Activated T-helper 2 cell treated with anti-CD3 and anti-CD28 coated beads, Interferon-gamma antibody, Interleukin-2, Interleukin-4, amounts not matched to agents 10 μg/mL and 5 μg/mL and 100 μg/mL, durations not matched to agents 14 hours and 24 hours and 36 hours (primary cell): ENCODE measurements at regions of chr5 and their contacts with region 1.

Region 1: GRCh38 chr5:54517174-54518092 is at the start of gene SNX18:
- DNase-seq: peak; percentile 89
- H3K4me3 Mint-ChIP-seq: peak within 1 kb of the TSS; percentile 82
- H3K27ac Mint-ChIP-seq: no peak within 1 kb of the TSS
- H3K4me1 Mint-ChIP-seq: peaks cover 31% of the 10 kb centered on the region
- H3K27me3 Mint-ChIP-seq: peaks cover 22% of the 10 kb centered on the region
- total RNA-seq, gene SNX18: 13.3 and 13.4 TPM in 2 replicates

Region 2: DNA sequence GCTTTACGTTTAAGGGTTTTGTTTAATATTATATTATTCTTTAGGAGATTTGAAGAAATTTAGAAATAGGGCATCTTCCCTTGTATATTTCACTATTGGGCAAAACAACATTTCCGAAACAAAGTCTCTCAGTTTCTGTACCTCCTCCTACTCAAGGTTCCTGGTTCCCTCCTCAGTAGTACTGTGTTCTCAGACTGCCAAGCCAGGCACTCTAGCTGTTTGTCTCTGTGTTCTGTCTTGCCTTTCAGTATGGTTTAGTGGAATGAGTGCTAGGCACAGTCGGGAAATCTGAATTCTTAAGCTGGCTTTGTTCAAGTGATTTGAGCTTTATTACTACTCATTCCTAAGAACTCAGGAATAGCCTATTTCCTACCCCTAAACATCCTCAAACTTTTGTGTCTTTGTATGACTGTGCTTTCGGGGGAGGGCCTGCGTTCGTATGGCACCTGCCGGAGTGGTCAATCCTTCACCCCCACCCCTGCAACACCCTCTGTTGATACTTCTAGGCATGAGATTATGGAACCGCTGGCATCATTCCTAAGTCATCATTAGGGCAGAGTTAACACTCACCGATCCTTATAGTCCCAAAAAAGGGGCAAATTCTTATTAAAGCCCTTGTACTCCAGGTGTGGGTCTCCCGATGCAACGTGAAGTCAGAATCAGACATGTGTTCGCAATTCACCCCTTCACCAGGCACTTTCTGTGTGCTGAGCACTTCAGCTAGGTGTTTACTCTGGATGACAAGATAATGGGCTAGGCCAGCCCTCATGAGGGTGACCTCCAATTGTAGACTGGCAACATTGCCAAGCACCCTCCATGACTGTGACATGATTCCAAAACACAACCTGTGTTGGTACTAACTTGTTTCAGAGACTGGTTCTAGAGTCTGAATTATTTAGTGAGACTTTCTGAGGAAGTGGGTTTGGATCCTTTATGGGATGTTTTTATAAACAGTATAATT is 24.7 kb after region 1 on chr5:
- intact Hi-C with region 1: no loop called
- DNase-seq: no peak
- H3K4me3 Mint-ChIP-seq: no peak overlapping the region
- H3K27ac Mint-ChIP-seq: no peak overlapping the region
- H3K4me1 Mint-ChIP-seq: peaks cover 7% of the 10 kb centered on the region
- H3K27me3 Mint-ChIP-seq: no peaks in the 10 kb centered on the region

Region 3: DNA sequence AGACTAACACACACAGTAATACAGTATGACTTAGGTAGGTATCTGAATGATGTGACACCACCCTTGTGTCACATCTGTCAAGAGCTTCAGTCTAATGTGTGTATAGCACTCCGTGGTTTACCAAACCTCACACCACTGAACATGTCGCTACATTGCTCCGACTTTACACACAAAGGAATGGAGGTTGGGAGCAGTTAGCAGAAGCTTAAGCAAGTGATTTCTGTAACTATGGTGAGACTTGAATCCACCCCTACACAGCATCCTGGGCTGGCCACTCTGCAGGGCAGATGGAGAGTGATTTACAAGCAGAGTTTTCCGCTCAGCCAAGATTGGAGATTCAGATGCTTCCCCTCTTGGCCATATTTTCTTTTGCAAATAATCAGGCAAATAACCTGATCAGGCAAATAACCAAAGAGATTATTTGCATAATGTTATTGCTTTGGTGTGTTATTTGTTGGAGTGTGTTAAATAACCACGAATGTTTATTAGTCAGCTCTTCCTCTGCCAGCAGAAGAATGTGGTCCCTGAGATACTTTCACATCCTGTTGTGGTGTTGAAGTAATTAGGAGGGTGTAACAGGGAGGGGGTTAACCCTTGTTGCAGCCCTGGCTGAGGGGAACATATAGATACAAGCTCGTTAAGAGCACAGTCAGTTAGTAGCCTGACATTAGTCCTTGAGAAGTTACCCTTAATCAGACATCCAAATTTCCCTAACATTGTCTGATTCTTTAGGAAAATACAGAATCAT is 92.9 kb after region 1 on chr5:
- intact Hi-C with region 1: loop called (anchors 10 kb)
- DNase-seq: peak; percentile 46
- H3K4me3 Mint-ChIP-seq: peak overlapping the region; percentile 38
- H3K27ac Mint-ChIP-seq: peak overlapping the region; percentile 58
- H3K4me1 Mint-ChIP-seq: peaks cover 29% of the 10 kb centered on the region
- H3K27me3 Mint-ChIP-seq: no peaks in the 10 kb centered on the region

Region 4: GRCh38 chr5:54719384-54720283 is 202.2 kb after region 1 on chr5:
- intact Hi-C with region 1: loop called (anchors 2 kb)
- DNase-seq: no peak
- H3K4me3 Mint-ChIP-seq: no peak overlapping the region
- H3K27ac Mint-ChIP-seq: peak overlapping the region; percentile 54
- H3K4me1 Mint-ChIP-seq: peaks cover 47% of the 10 kb centered on the region
- H3K27me3 Mint-ChIP-seq: no peaks in the 10 kb centered on the region

Region 5: DNA sequence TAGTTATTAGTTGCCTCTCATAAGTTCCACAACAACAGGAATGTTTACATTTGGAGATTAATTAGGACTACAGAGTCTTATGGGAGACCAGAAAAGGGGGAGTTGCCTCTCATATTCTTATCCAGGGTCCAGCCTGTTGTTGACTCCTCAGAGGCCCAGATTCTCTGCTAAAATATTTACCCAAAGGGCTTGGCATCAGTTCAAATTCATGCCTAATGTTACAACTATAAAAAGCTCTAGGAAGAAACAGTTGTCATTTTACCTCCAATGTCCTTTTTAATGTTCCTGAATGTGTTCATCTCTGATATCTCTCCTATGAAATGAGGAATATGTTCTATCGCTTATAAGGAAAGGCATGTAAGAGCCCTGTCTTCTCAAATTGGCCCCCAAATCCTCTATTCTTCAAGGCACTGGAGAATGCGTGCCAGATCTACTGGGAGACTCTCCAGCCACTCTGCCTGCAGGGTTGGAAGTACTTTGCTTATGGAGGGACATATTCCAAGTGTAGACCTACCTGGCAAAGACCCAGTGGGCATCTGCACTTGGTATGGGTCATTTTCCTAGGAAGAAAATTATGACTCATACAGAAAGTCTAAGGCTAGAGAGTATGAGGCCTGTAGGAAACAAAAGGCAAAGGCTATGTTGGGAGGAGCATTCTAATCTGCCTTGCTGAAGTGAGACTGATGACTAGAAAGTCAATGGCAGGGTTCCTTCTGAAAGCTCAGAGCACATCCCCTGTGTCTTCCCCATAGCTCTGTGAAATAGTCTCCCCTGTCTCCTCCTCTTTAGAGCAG is 275.4 kb after region 1 on chr5:
- intact Hi-C with region 1: loop called (anchors 1 kb)
- DNase-seq: no peak
- H3K4me3 Mint-ChIP-seq: no peak overlapping the region
- H3K27ac Mint-ChIP-seq: peak overlapping the region; percentile 88
- H3K4me1 Mint-ChIP-seq: peaks cover 35% of the 10 kb centered on the region
- H3K27me3 Mint-ChIP-seq: peaks cover 25% of the 10 kb centered on the region

Region 6: DNA sequence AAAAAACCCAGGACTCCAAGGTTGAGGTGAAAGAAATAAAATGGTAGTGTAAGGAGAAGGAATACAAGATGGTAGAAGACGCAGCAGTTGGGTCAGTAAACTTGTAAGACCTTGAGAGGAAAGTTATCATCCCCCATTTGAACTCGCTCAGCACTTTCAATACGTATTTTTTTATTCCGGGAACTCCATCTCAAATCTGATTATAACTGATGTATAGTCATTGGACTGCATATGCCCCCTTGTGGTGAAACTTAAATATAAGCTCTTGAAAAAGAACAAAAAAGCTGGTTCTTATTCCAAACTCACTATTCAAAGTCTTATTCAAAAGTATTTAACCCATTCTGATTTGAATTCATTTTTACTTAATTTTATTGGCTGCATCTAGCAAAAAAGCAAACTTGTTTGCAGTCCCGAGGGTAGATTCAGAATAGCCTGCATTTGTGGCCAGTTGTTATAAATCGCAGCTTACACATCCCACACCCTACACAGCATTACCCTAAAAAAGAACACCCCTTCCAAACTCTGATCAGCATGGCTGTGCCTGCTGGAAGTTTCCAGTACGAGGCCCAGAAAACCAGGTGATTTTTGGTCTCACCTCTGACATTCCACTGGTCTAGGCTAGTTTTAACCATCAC is 350.0 kb after region 1 on chr5:
- intact Hi-C with region 1: loop called (anchors 1 kb)
- DNase-seq: no peak
- H3K4me3 Mint-ChIP-seq: no peak overlapping the region
- H3K27ac Mint-ChIP-seq: no peak overlapping the region
- H3K4me1 Mint-ChIP-seq: peaks cover 29% of the 10 kb centered on the region
- H3K27me3 Mint-ChIP-seq: peaks cover 64% of the 10 kb centered on the region